Activated naive CD4-positive, alpha-beta T cell treated with anti-CD3 and anti-CD28 coated beads for 36 hours (primary cell): ENCODE measurements at regions of chr15 and their contacts with region 1.

Region 1: DNA sequence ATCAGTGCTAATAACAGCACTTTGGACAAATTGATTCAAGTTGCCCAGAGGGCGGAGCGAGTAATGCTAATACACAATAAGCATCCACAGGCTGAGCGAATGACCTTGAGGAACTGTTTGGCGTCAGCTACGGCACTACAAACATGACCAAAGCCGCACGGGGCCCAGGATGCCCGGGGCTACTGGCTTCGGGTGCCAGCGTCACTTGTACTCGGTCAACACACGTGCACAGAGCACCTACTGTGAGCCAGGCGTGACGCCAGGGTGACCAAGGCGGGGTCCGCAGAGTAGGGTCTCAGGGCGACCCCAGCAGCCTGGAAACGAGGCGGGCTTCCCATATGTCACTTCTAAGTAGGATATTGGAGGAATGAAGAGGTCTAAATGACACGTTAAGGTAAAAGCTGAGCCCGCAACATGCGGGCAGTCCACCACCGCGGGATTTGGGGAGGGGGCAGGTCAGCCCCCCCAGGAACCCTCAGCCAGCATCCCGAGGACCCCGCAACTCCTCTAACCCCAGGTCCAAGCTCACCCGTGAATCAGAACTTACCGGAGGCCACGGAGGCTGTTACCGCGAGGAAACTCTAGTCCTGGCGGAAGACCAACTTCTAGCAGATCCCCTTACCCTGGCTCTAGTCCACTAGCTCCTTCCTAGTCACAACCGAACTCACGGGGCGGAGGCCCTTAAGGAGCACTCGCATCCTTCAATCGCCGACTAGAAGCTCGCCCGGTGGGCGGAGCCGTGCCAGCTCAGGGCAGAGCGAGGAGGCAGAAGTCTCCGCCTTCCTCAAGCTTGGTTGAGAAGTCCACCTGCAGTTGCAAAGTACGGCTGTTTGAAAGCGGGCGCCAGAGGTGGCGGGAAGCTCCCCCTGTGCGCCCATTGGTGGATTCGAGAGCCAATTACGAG is at the start of gene CEP152:
- DNase-seq: peak; percentile 99
- H3K4me3 Mint-ChIP-seq: peak within 1 kb of the TSS; percentile 97
- H3K27ac Mint-ChIP-seq: peak within 1 kb of the TSS; percentile 95
- H3K4me1 Mint-ChIP-seq: peaks cover 35% of the 10 kb centered on the region
- H3K27me3 Mint-ChIP-seq: no peaks in the 10 kb centered on the region
- total RNA-seq, gene CEP152: 55.1 to 62.0 TPM

Region 2: GRCh38 chr15:48330855-48331795 is 479.5 kb before region 1 on chr15 and contains the start of gene DUT:
- CTCF ChIA-PET with region 1: no interaction called
- intact Hi-C with region 1: loop called (anchors 1 kb)
- DNase-seq: peak; percentile 84
- H3K4me3 Mint-ChIP-seq: peak within 1 kb of the TSS; percentile 95
- H3K27ac Mint-ChIP-seq: peak within 1 kb of the TSS; percentile 97
- H3K4me1 Mint-ChIP-seq: peaks cover 37% of the 10 kb centered on the region
- H3K27me3 Mint-ChIP-seq: no peaks in the 10 kb centered on the region
- total RNA-seq, gene DUT: 605 to 628 TPM

Region 3: GRCh38 chr15:48682949-48683651 is 127.6 kb before region 1 on chr15:
- CTCF ChIA-PET with region 1: no interaction called
- intact Hi-C with region 1: no loop called
- DNase-seq: no peak
- H3K4me3 Mint-ChIP-seq: no peak overlapping the region
- H3K27ac Mint-ChIP-seq: no peak overlapping the region
- H3K4me1 Mint-ChIP-seq: no peaks in the 10 kb centered on the region
- H3K27me3 Mint-ChIP-seq: no peaks in the 10 kb centered on the region

Region 4: DNA sequence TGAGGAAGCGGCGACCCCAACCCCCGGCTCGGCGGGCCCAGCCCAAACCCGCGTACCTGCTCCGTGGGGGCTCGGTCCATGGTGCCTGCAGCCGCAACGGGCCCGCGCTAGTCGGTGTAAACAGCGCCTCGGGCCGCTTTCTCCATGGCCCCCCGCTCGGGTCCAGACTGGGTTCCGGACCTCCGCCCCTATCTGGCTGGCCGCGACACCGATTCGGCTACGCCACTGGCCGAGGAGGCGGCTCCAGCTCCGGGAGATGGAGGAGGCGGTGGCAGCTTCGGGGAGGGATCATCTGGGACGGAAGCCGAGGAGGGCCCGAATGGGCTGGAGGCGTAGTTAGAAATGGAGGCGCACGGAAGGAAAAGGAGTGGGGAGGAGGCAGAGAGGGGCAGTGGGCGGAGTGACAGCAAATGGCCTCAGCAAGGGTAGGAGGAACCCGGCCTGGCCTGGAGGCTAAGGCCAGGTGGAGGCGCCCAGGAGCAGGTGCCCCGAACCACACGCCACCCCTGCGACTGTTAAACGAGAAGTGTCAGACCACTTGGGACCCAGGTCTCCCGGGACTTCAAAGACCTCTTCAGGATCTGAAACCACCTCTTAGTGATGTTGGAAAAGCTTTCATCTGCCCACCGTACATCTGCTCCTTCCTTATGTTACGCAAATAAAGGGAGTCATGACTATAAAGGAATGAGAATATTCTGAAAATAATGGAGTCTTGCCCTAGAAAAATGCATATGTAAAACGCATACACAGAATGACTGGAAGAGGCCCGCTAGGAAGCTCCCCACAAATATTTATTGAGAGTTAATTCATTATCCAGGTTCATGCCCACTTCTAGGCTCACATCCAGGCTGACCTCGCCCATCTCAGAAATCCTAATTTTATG is 235.8 kb after region 1 on chr15 and contains the start of gene SECISBP2L:
- CTCF ChIA-PET with region 1: no interaction called
- intact Hi-C with region 1: loop called (anchors 1 kb)
- DNase-seq: peak; percentile 95
- H3K4me3 Mint-ChIP-seq: peak within 1 kb of the TSS; percentile 91
- H3K27ac Mint-ChIP-seq: peak within 1 kb of the TSS; percentile 81
- H3K4me1 Mint-ChIP-seq: peaks cover 19% of the 10 kb centered on the region
- H3K27me3 Mint-ChIP-seq: no peaks in the 10 kb centered on the region
- total RNA-seq, gene SECISBP2L: 17.4 to 18.6 TPM

Region 5: DNA sequence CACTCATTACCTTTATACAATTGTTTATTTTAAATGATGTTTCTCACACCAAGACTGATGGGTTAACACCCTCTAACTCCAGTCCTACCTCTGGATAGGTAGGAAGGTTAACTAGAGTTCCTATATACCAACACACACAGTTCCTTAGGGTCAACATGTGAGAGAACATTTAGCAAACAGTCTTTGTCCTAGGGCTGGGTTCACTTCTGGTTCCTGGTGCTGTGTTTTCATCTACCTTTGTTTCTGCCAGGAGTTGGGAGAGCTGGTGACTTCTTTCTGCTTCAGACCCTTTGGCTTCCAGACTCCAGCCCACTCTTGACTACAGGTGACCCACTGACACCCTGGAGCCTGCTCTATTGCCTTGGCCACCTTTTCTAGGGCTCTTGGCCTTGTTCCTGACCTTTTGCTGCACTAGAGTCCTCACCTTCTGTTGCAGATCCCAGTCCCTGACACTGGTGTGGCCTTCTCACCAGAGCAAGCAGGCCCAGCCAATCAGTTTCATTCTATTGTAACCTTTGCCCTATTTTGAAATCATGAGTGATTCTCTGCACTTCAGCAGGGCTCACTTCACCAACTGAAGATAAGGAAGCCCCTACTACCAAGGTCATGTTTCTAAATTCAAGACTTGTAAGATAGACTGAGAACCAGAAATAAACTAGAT is 285.6 kb after region 1 on chr15:
- CTCF ChIA-PET with region 1: no interaction called
- intact Hi-C with region 1: no loop called
- DNase-seq: no peak
- H3K4me3 Mint-ChIP-seq: no peak overlapping the region
- H3K27ac Mint-ChIP-seq: no peak overlapping the region
- H3K4me1 Mint-ChIP-seq: no peaks in the 10 kb centered on the region
- H3K27me3 Mint-ChIP-seq: no peaks in the 10 kb centered on the region

Region 6: GRCh38 chr15:49169880-49170597 is 359.4 kb after region 1 on chr15 and contains the start of gene GALK2:
- CTCF ChIA-PET with region 1: no interaction called
- intact Hi-C with region 1: loop called (anchors 1 kb)
- DNase-seq: peak; percentile 91
- H3K4me3 Mint-ChIP-seq: peak within 1 kb of the TSS; percentile 96
- H3K27ac Mint-ChIP-seq: peak within 1 kb of the TSS; percentile 94
- H3K4me1 Mint-ChIP-seq: peaks cover 25% of the 10 kb centered on the region
- H3K27me3 Mint-ChIP-seq: no peaks in the 10 kb centered on the region
- total RNA-seq, gene GALK2: 22.6 to 24.1 TPM

Region 7: GRCh38 chr15:50424066-50424890 is 1613.6 kb after region 1 on chr15 and contains the start of gene USP8:
- CTCF ChIA-PET with region 1: no interaction called
- intact Hi-C with region 1: loop called (anchors 1 kb)
- DNase-seq: peak; percentile 96
- H3K4me3 Mint-ChIP-seq: peak within 1 kb of the TSS; percentile 94
- H3K27ac Mint-ChIP-seq: peak within 1 kb of the TSS; percentile 92
- H3K4me1 Mint-ChIP-seq: peaks cover 30% of the 10 kb centered on the region
- H3K27me3 Mint-ChIP-seq: no peaks in the 10 kb centered on the region
- total RNA-seq, gene USP8: 31.6 TPM